ENCODE measurements at regions of chr1 and their contacts with region 1.

Region 1: DNA sequence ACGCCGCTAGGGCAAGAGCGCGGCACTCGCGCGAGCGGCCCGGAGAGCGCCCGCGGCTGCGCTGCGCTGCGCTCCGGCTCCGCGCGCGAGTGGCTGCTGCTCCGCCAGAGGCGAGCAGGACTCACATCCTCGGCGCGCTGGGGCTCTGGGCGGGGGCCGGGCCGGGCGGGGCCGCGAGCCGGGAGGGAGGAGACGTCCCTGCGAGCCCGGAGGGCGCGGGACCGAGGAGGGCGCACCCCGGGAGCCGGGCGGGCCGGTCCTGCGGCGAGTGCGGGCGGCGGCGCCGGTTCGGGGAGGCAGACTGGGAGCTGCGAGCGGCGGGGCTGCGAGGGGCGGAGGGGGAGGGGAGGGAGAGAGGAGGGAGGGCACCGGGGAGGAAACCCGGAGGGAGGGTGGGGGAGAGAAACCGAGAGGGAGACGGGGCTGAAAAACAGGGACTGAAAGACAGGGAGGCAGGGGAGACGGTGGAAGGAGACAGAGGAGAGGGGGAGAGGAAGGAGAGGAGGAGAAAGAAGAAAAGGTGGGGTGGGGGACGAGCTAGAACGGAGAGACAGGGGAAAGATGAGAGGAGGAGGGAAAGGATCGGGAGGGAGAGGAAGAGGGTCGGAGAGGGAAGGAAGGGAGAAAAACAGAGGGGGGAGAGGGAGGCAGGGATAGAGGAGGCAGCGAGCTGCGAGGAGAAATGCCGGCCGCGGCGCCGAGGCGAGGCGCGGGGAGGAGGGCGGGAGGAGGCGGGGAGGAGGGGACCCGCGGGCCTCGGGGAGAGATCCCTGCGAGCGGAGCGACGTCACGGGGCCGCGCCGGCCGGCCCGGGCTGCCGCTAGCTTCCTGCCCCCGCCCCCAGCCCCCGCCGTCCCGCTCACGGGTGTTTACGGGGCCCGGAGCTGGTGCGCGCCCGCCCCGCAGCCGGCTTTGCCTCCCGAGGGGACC is at the start of gene CAMK2N1:
- DNase-seq: peak; percentile 93
- H3K4me3 ChIP-seq: peak within 1 kb of the TSS; percentile 49 to 83 (median 80)
- H3K27ac ChIP-seq: peak within 1 kb of the TSS; percentile 89 to 97 (median 92)
- H3K4me1 ChIP-seq: peaks cover 0 to 57% (median 37%) of the 10 kb centered on the region in 4 donors
- H3K27me3 ChIP-seq: no peaks in the 10 kb centered on the region
- CTCF ChIP-seq: no peak
- EP300 ChIP-seq: no peak
- POLR2A ChIP-seq: peak in 1 of 2 donors; percentile 63
- total RNA-seq, gene CAMK2N1: 18.3 to 31.9 (median 28.0) TPM

Region 2: DNA sequence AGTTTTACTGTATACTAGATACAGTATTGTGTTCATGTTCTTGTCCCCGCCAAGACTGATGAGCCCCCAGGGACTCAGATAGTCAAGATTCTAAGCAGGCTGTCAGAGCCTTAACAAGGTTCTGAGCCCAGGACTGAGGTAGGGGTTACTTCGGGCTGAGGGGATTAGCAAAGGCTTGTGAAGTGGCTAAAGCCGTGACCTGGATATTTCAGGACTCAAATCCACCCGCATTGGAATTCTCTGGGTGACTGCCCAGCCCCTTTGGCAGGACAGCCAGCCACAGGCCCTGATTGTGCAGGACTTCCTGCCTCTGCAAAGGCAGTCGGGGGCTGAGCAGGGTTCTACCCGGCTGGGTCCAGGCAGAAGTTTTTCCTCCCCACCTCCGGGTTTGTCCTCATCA is 415.9 kb before region 1 on chr1 and contains the start of gene PLA2G5:
- intact Hi-C with region 1: loop called (anchors 10 kb)
- DNase-seq: peak; percentile 86
- H3K4me3 ChIP-seq: peak within 1 kb of the TSS; percentile 17 to 50 (median 46)
- H3K27ac ChIP-seq: peak within 1 kb of the TSS; percentile 84 to 90 (median 85)
- H3K4me1 ChIP-seq: peaks cover 0 to 41% (median 38%) of the 10 kb centered on the region in 4 donors
- H3K27me3 ChIP-seq: no peaks in the 10 kb centered on the region
- CTCF ChIP-seq: no peak
- EP300 ChIP-seq: no peak
- POLR2A ChIP-seq: peak in 1 of 2 donors; percentile 35
- total RNA-seq, gene PLA2G5: 18.6 to 45.4 (median 30.5) TPM

Region 3: DNA sequence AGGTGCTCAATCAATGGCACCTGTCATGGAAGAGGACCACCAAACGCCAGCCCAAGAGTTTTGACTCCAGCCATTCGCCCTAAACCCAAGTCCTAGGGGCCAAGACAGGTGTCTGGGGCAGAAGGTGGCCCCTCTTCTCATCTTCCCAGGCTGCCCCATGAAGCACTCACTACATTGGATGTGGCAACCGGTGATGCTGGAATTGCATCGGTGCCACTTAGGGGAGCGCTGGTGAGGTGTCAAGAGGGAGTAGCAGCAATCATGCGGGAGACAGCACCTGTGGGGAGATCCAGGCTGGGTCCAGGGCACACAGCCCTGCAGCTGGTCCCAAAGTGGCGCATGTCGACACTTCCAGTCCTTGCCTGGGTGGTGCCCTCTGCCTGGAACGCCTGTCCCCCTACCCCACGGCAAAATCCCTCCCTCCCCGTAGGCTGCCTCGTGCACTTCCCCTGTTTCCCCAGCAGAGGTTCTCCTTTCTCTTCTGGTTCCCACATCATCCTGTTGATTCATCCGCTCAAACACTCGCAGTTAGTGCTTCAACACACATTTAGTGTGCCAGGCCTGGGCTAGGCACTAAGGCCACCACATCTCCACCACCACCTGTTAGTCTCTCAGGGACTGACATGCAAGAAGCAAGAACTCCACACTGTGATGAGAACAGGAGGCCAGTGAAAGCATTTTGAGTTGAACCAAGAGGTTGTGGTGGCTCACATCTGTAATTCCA is 385.0 kb before region 1 on chr1:
- intact Hi-C with region 1: loop called (anchors 10 kb)
- DNase-seq: peak; percentile 70
- H3K4me3 ChIP-seq: no peak overlapping the region
- H3K27ac ChIP-seq: no peak overlapping the region
- H3K4me1 ChIP-seq: peaks cover 0 to 11% (median 2%) of the 10 kb centered on the region in 4 donors
- H3K27me3 ChIP-seq: no peaks in the 10 kb centered on the region
- CTCF ChIP-seq: peak; percentile 86 to 90 (median 88)
- EP300 ChIP-seq: no peak
- POLR2A ChIP-seq: no peak

Region 4: DNA sequence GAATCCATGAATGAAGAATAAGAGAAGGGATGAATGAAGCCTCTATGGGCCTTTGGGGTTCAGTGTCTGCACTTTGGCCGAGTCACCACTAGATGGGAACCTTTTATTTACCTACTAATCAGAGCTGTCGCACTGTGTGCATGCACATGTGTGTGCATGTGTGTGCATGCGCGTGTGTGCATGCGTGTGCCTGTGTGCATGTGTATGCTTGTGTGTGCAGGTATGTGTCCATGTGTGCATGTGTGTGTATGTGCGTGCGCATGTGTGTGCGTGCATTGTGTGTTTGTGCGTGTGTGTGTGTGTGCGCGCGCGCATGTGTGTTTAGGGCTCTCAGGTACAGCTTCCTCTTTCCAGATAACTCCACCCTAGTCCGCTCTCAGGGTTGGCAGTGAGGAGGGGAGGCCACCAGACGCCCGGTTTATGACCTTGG is 320.3 kb before region 1 on chr1:
- intact Hi-C with region 1: loop called (anchors 5 kb)
- DNase-seq: no peak
- H3K4me3 ChIP-seq: no peak overlapping the region
- H3K27ac ChIP-seq: peak overlapping the region in 3 of 4 donors; percentile 79 to 80 (median 80)
- H3K4me1 ChIP-seq: peaks cover 0 to 45% (median 29%) of the 10 kb centered on the region in 4 donors
- H3K27me3 ChIP-seq: no peaks in the 10 kb centered on the region
- CTCF ChIP-seq: peak; percentile 40 to 49 (median 40)
- EP300 ChIP-seq: no peak
- POLR2A ChIP-seq: no peak

Region 5: GRCh38 chr1:20329793-20330542 is 155.8 kb before region 1 on chr1:
- intact Hi-C with region 1: no loop called
- DNase-seq: no peak
- H3K4me3 ChIP-seq: no peak overlapping the region
- H3K27ac ChIP-seq: no peak overlapping the region
- H3K4me1 ChIP-seq: peaks cover 0 to 6% (median 2%) of the 10 kb centered on the region in 4 donors
- H3K27me3 ChIP-seq: peaks cover 0 to 5% (median 0%) of the 10 kb centered on the region in 3 donors
- CTCF ChIP-seq: no peak
- EP300 ChIP-seq: no peak
- POLR2A ChIP-seq: no peak

Region 6: GRCh38 chr1:20405893-20406604 is 79.7 kb before region 1 on chr1:
- intact Hi-C with region 1: no loop called
- DNase-seq: no peak
- H3K4me3 ChIP-seq: no peak overlapping the region
- H3K27ac ChIP-seq: no peak overlapping the region
- H3K4me1 ChIP-seq: no peaks in the 10 kb centered on the region
- H3K27me3 ChIP-seq: peaks cover 0 to 43% (median 24%) of the 10 kb centered on the region in 3 donors
- CTCF ChIP-seq: no peak
- EP300 ChIP-seq: no peak
- POLR2A ChIP-seq: no peak

Region 7: GRCh38 chr1:20551945-20552727 is 66.3 kb after region 1 on chr1 and contains the start of gene FAM43B:
- intact Hi-C with region 1: no loop called
- DNase-seq: peak; percentile 88
- H3K4me3 ChIP-seq: peak within 1 kb of the TSS in 3 of 4 donors; percentile 35 to 45 (median 39)
- H3K27ac ChIP-seq: peak within 1 kb of the TSS; percentile 44 to 56 (median 55)
- H3K4me1 ChIP-seq: peaks cover 0 to 29% (median 23%) of the 10 kb centered on the region in 4 donors
- H3K27me3 ChIP-seq: peaks cover 21 to 70% (median 42%) of the 10 kb centered on the region in 3 donors
- CTCF ChIP-seq: no peak
- EP300 ChIP-seq: no peak
- POLR2A ChIP-seq: no peak
- total RNA-seq, gene FAM43B: 0.81 to 1.7 (median 1.5) TPM

Measured in sigmoid colon (tissue), 7 donors.